ENCODE measurements at regions of chr3 and their contacts with region 1.

Region 1: DNA sequence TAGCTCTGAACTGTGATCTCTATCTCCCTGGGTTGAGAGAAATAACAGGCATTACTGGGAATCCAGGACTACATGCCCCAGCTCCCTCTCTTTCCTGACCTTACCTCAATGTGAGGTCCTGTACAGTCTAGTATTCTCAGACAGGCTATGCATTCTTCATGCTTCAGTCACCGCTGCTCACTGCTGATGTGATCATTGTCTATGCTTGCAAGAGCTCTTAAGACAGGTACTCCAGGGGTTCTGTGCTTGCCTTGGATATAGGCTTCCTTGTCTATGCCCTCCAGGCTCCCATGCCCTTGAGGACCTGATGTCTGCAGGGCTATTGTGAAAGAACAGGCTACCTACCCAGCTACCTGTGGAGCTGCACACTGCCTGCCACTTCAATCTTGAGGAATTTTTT is 183.6 kb downstream of the MBNL1 start:
- DNase-seq: no peak
- ATAC-seq: no peak
- H3K4me3 ChIP-seq: no peak overlapping the region
- H3K4me3 Mint-ChIP-seq: no peak overlapping the region
- H3K27ac ChIP-seq: peak overlapping the region in 1 of 2 experiments; percentile 23
- H3K27ac Mint-ChIP-seq: peak overlapping the region; percentile 72
- H3K4me1 ChIP-seq: peaks cover 31% of the 10 kb centered on the region
- H3K4me1 Mint-ChIP-seq: peaks cover 56% of the 10 kb centered on the region
- H3K27me3 ChIP-seq: no peaks in the 10 kb centered on the region
- H3K27me3 Mint-ChIP-seq: no peaks in the 10 kb centered on the region
- CTCF ChIP-seq: no peak

Region 2: GRCh38 chr3:152436707-152437590 is 15.4 kb before region 1 on chr3:
- CTCF ChIA-PET with region 1: no interaction called
- POLR2A ChIA-PET with region 1: no interaction called
- intact Hi-C with region 1: loop called in 1 of 2 experiments (anchors 2 kb)
- DNase-seq: no peak
- ATAC-seq: no peak
- H3K4me3 ChIP-seq: no peak overlapping the region
- H3K4me3 Mint-ChIP-seq: peak overlapping the region; percentile 15
- H3K27ac ChIP-seq: peak overlapping the region in 1 of 2 experiments; percentile 33
- H3K27ac Mint-ChIP-seq: peak overlapping the region; percentile 87
- H3K4me1 ChIP-seq: peaks cover 35% of the 10 kb centered on the region
- H3K4me1 Mint-ChIP-seq: peaks cover 70% of the 10 kb centered on the region
- H3K27me3 ChIP-seq: no peaks in the 10 kb centered on the region
- H3K27me3 Mint-ChIP-seq: no peaks in the 10 kb centered on the region
- CTCF ChIP-seq: no peak

Region 3: GRCh38 chr3:154294016-154294415 is 1841.7 kb after region 1 on chr3:
- CTCF ChIA-PET with region 1: no interaction called
- POLR2A ChIA-PET with region 1: no interaction called
- intact Hi-C with region 1: loop called in 1 of 2 experiments (anchors 10 kb)
- DNase-seq: no peak
- ATAC-seq: no peak
- H3K4me3 ChIP-seq: no peak overlapping the region
- H3K4me3 Mint-ChIP-seq: no peak overlapping the region
- H3K27ac ChIP-seq: no peak overlapping the region
- H3K27ac Mint-ChIP-seq: peak overlapping the region; percentile 5
- H3K4me1 ChIP-seq: no peaks in the 10 kb centered on the region
- H3K4me1 Mint-ChIP-seq: peaks cover 2% of the 10 kb centered on the region
- H3K27me3 ChIP-seq: no peaks in the 10 kb centered on the region
- H3K27me3 Mint-ChIP-seq: no peaks in the 10 kb centered on the region
- CTCF ChIP-seq: no peak